ENCODE measurements at regions of chr10 and their contacts with region 1.

Region 1: DNA sequence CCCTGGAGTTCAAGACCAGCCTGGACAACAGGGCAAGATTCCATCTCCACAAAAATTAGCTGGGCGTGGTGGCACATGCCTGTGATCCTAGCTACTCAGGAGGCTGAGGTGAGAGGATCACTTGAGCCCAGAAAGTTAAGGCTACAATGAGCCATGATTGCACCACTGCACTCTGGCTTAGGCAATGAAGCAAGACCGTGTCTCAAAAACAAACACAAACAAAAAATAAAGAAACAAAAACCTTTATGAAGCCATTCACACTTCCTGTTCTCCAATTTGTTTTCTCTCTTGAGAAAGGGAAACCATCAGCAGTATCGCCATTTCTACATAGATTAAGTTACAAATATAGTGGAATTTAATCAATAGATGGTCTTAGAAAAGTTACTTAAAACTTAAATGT is 19.8 kb downstream of the YME1L1 start:
- DNase-seq: no peak
- ATAC-seq: no peak
- H3K4me3 ChIP-seq: no peak overlapping the region
- H3K27ac ChIP-seq: no peak overlapping the region
- H3K4me1 ChIP-seq: no peaks in the 10 kb centered on the region
- H3K27me3 ChIP-seq: no peaks in the 10 kb centered on the region
- CTCF ChIP-seq: no peak

Region 2: DNA sequence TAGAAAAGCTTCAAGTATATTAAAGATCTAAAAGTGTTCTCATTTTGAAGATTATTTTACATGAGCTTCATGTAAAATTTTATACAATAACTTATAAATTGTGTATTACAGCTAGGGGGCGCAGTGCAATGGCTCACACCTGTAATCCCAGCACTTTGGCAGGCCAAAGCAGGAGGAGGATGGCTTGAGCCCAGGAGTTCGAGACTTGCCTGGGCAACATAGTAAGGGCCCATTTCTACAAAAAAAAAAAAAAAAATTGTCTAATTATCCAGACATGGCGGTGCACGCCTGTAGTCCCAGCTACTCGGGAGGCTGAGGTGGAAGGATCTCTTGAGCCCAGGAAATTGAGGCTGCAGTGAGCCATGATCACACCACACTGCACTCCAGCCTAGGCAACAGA is 89.6 kb after region 1 on chr10:
- intact Hi-C with region 1: loop called (anchors 10 kb)
- DNase-seq: no peak
- ATAC-seq: peak; percentile 81
- H3K4me3 ChIP-seq: no peak overlapping the region
- H3K27ac ChIP-seq: no peak overlapping the region
- H3K4me1 ChIP-seq: no peaks in the 10 kb centered on the region
- H3K27me3 ChIP-seq: no peaks in the 10 kb centered on the region
- CTCF ChIP-seq: peak; percentile 70

Region 3: GRCh38 chr10:27319752-27320561 is 185.6 kb after region 1 on chr10:
- intact Hi-C with region 1: no loop called
- DNase-seq: peak; percentile 78
- ATAC-seq: peak; percentile 98
- H3K4me3 ChIP-seq: peak overlapping the region; percentile 43
- H3K27ac ChIP-seq: peak overlapping the region; percentile 47
- H3K4me1 ChIP-seq: peaks cover 6% of the 10 kb centered on the region
- H3K27me3 ChIP-seq: peaks cover 12% of the 10 kb centered on the region
- CTCF ChIP-seq: no peak